ENCODE measurements at regions of chr10 and their contacts with region 1.

Region 1: DNA sequence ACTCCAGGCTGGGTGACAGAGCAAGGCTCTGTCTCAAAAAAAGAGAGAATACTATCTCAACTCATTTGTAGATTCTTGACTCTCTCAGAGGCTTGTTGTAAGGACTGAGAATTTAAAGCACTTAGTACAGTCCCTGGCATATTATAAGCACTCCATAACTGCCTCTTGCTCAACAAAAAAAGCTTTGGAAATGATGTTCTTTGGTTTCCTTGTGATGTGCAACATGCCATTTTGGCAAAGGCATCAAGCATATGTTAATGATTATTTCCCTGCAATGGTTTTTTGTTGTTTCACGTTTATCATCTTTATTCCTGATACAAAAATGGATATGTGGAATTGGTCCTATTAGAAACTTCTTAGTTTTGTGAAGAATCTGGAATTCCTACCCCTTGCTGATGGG is 15.7 kb downstream of the NOLC1 start:
- DNase-seq: no peak
- H3K4me3 ChIP-seq: no peak overlapping the region
- H3K4me3 Mint-ChIP-seq: no peak overlapping the region
- H3K27ac Mint-ChIP-seq: no peak overlapping the region
- H3K4me1 ChIP-seq: no peaks in the 10 kb centered on the region
- H3K4me1 Mint-ChIP-seq: no peaks in the 10 kb centered on the region
- H3K27me3 ChIP-seq: no peaks in the 10 kb centered on the region
- H3K27me3 Mint-ChIP-seq: no peaks in the 10 kb centered on the region
- CTCF ChIP-seq: no peak

Region 2: DNA sequence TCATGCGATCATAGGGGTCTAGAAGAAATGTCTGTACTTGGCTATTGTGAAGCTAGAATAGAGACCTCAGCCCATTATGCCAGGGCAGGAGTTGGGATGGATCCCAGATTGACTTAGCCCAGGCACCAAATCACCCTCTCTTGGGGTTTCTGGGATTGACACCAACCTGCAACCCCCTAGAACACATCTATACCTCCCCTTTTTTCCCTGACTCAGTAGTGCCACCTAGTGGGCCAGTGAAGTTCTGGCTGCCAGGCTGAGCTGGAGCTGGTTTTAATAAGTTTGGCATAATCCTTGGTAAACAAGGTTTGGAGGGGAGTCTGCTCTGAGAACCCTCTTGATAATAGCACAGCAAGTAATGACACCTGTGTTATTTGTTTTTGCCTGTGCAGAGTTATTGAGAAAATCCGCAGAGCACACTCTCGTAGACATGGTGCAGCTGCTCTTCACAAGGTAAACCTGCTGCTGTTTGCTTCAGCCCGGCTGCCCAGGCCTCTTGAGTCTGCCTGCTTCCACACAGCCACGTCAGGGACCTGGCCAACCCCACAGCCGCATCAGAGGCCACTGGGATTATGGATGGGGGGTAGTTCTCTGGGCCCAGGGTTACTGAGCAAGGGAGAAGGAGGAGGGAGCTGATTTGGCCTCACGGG is 184.3 kb after region 1 on chr10:
- CTCF ChIA-PET with region 1: interaction called, 16 read pairs
- POLR2A ChIA-PET with region 1: no interaction called
- intact Hi-C with region 1: loop called (anchors 1 kb)
- DNase-seq: peak; percentile 68 to 74
- H3K4me3 ChIP-seq: no peak overlapping the region
- H3K4me3 Mint-ChIP-seq: no peak overlapping the region
- H3K27ac Mint-ChIP-seq: peak overlapping the region; percentile 53
- H3K4me1 ChIP-seq: no peaks in the 10 kb centered on the region
- H3K4me1 Mint-ChIP-seq: no peaks in the 10 kb centered on the region
- H3K27me3 ChIP-seq: no peaks in the 10 kb centered on the region
- H3K27me3 Mint-ChIP-seq: no peaks in the 10 kb centered on the region
- CTCF ChIP-seq: peak; percentile 87 to 92

Region 3: GRCh38 chr10:102399217-102400089 is 231.6 kb after region 1 on chr10:
- CTCF ChIA-PET with region 1: interaction called, 9 read pairs
- POLR2A ChIA-PET with region 1: no interaction called
- intact Hi-C with region 1: loop called (anchors 2 kb)
- DNase-seq: peak; percentile 76 to 91
- H3K4me3 ChIP-seq: peak overlapping the region; percentile 53
- H3K4me3 Mint-ChIP-seq: peak overlapping the region; percentile 64
- H3K27ac Mint-ChIP-seq: peak overlapping the region; percentile 29
- H3K4me1 ChIP-seq: peaks cover 35% of the 10 kb centered on the region
- H3K4me1 Mint-ChIP-seq: peaks cover 24% of the 10 kb centered on the region
- H3K27me3 ChIP-seq: no peaks in the 10 kb centered on the region
- H3K27me3 Mint-ChIP-seq: no peaks in the 10 kb centered on the region
- CTCF ChIP-seq: peak; percentile 75 to 93